SK-N-SH (cell line): ENCODE measurements at regions of chr3 and their contacts with region 1.

Region 1: GRCh38 chr3:134212906-134213665 is 37.6 kb downstream of the RYK start:
- DNase-seq: peak; percentile 58
- H3K4me3 ChIP-seq: no peak overlapping the region; a peak in 1 of 4 replicates
- H3K27ac ChIP-seq: no peak overlapping the region
- H3K4me1 ChIP-seq: no peaks in the 10 kb centered on the region; a peak in 1 of 4 replicates
- H3K27me3 ChIP-seq: no peaks in the 10 kb centered on the region
- CTCF ChIP-seq: peak; percentile 98
- EP300 ChIP-seq: no peak
- RAD21 ChIP-seq: peak; percentile 85

Region 2: DNA sequence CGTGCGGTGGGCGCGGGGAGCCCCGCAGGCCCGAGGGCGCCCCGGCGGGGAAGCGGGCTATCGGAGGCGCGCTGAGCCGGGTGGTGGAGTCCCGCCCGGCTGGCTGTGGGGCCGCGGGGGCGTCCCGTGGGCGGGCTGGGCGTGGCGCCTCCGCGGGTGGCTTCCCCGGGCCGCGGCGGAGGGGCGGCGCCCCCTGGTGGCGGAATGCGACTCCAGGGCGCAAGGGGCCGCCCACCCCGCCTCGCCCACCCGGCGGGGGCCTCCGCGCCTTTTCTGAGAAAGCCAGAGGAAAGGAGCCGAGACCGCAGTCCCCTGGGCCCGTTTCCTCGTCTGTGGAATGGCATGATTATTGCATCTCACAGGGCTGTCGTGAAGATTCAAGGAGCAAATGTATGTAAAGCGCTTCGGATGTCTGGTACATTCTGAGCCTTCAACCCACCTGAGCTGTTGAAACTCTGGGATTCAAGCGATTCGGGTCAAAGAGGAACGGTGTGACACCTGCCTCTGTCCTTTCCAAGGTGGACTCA is 285.5 kb before region 1 on chr3:
- CTCF ChIA-PET with region 1: interaction called, 152 read pairs
- POLR2A ChIA-PET with region 1: no interaction called
- DNase-seq: peak; percentile 95
- H3K4me3 ChIP-seq: peak overlapping the region; percentile 23 to 53; a peak in 3 of 4 replicates
- H3K27ac ChIP-seq: no peak overlapping the region
- H3K4me1 ChIP-seq: peaks cover 0 to 10% of the 10 kb centered on the region in 2 experiments; a peak in 2 of 4 replicates
- H3K27me3 ChIP-seq: no peaks in the 10 kb centered on the region
- CTCF ChIP-seq: peak; percentile 75
- EP300 ChIP-seq: no peak
- RAD21 ChIP-seq: peak; percentile 61

Region 3: GRCh38 chr3:133944641-133945380 is 268.3 kb before region 1 on chr3:
- CTCF ChIA-PET with region 1: interaction called, 13 read pairs
- POLR2A ChIA-PET with region 1: no interaction called
- DNase-seq: peak; percentile 59
- H3K4me3 ChIP-seq: peak overlapping the region in 1 of 2 experiments; percentile 13; a peak in 2 of 4 replicates
- H3K27ac ChIP-seq: peak overlapping the region; percentile 70 to 80
- H3K4me1 ChIP-seq: peaks cover 26 to 30% of the 10 kb centered on the region in 2 experiments; a peak in 3 of 4 replicates
- H3K27me3 ChIP-seq: peaks cover 8% of the 10 kb centered on the region; the same call in 1 of the 2 replicates
- CTCF ChIP-seq: no peak
- EP300 ChIP-seq: peak; percentile 22 to 90; a peak in 2 of 4 replicates
- RAD21 ChIP-seq: no peak

Region 4: DNA sequence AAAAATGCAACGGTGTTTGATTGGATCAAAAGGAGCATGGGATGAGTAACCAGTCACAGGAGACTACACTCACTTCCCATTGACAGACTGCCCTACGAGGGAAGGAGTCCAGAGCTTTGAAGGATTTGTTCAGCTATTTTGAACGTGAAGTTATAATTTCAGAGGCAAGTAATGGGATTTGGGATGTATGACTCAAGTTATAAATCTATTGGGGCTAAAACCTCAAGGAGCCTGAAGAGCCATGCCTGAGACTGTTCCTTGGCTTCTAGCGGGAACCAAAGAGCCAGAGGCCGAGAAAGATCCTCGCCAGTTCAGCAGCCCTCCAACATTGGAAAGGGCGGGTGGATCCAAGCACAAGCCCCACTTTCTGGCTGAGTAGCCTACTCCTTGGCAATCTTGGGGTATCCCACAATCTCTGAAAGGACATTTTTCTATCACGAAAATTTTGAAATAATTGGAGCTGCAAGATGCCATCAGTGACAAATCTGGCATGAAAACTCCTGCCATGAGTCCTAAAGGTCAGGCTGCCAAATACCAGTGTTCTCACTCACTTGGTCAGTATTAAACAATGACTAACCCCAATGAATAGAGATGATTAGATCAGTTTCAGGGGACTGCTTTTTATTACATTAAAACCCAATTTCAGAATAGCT is 134.8 kb before region 1 on chr3:
- CTCF ChIA-PET with region 1: no interaction called
- POLR2A ChIA-PET with region 1: no interaction called
- DNase-seq: no peak
- H3K4me3 ChIP-seq: no peak overlapping the region
- H3K27ac ChIP-seq: no peak overlapping the region
- H3K4me1 ChIP-seq: peaks cover 0 to 2% of the 10 kb centered on the region in 2 experiments; a peak in 1 of 4 replicates
- H3K27me3 ChIP-seq: no peaks in the 10 kb centered on the region
- CTCF ChIP-seq: no peak
- EP300 ChIP-seq: no peak
- RAD21 ChIP-seq: no peak

Region 5: DNA sequence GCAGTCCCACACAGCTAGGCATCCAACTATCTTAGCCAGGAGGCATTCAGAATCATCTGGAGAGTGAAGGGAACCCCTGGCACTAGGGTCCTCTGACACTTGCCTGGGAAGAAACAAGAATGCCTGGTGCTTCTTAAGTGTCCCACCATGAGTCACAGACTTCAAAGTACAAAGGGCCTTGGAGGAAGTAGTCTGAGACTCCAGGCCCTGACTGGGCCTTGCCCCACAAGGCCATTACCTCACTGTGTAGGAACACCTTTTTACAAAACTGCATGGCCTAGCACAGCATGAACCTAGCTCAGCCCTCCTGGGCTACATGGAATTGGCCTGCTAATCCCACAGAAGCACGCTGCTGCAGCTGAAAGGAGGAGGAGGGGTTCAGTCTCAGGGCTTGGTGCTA is 78.8 kb before region 1 on chr3:
- CTCF ChIA-PET with region 1: no interaction called
- POLR2A ChIA-PET with region 1: no interaction called
- DNase-seq: no peak
- H3K4me3 ChIP-seq: no peak overlapping the region
- H3K27ac ChIP-seq: no peak overlapping the region
- H3K4me1 ChIP-seq: no peaks in the 10 kb centered on the region
- H3K27me3 ChIP-seq: no peaks in the 10 kb centered on the region
- CTCF ChIP-seq: no peak
- EP300 ChIP-seq: no peak
- RAD21 ChIP-seq: no peak

Region 6: DNA sequence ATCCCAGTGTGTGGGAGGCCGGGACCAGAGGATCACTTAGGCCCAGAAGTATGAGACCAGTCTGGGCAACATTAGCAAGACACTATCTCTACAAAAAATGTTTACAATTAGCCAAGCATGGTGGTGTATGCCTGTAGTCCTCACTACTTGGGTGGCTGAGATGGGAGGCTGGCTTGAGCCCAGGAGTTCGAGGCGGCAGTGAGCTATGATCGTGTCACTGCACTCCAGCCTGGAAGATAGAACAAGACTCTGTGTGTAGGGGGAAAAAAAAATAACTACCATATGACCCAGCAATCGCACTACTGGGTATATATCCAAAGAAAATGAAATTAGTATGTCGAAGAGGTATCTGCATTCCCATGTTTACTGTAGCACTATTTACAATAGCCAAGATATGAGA is 14.9 kb after region 1 on chr3:
- CTCF ChIA-PET with region 1: interaction called, 82 read pairs
- POLR2A ChIA-PET with region 1: no interaction called
- DNase-seq: no peak
- H3K4me3 ChIP-seq: no peak overlapping the region
- H3K27ac ChIP-seq: no peak overlapping the region
- H3K4me1 ChIP-seq: peaks cover 2 to 6% of the 10 kb centered on the region in 2 experiments; a peak in 3 of 4 replicates
- H3K27me3 ChIP-seq: no peaks in the 10 kb centered on the region
- CTCF ChIP-seq: no peak
- EP300 ChIP-seq: no peak
- RAD21 ChIP-seq: no peak

Region 7: DNA sequence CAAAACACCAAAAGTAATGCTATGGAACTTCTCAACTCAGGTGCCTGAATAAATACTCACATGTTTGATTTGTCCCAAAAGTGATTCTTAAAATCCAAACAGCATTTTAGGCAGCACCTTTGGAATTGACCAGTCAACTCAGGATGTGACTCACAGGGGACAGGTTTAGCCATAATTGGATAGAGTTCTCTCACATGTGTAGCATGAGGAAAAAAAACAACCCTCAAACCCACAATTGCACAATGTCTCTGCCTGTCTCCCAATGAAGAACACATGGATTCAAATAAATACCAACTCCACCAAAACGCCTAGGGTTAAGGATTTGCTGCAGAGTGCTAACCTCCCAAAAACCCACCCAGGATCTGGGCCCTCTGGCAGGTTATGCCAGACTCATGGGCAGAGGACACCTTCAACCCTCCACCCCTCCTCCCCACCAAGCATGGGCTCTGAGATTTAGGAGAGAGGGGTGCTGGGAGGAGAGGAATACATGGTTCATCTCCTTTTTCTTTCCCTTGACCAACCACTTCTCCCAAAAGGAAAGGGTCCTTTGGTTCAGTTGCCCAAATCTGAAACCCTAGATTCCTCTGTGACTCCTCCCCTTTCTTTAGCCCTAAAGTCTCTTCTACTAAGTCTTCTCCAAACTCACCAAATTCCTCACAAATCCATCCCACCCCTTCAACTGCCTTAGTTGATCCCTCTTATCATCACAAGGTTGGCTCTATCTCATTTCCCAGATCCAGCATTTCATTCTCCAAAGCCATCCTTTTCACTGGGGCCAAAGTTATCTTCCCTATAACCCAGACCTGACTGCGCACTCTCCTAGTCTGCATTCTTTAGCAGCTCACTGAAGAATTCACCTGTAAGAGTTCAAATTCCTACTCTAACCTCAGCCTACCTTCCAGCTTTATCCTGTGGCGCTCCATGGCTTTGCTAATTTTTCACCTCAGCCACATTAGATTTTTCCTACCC is 29.8 kb after region 1 on chr3:
- CTCF ChIA-PET with region 1: interaction called, 25 read pairs
- POLR2A ChIA-PET with region 1: no interaction called
- DNase-seq: no peak
- H3K4me3 ChIP-seq: no peak overlapping the region
- H3K27ac ChIP-seq: no peak overlapping the region
- H3K4me1 ChIP-seq: peaks cover 6 to 7% of the 10 kb centered on the region in 2 experiments; a peak in 3 of 4 replicates
- H3K27me3 ChIP-seq: no peaks in the 10 kb centered on the region
- CTCF ChIP-seq: no peak
- EP300 ChIP-seq: no peak
- RAD21 ChIP-seq: no peak

Region 8: GRCh38 chr3:134299185-134299887 is 86.2 kb after region 1 on chr3:
- CTCF ChIA-PET with region 1: interaction called, 32 read pairs
- POLR2A ChIA-PET with region 1: no interaction called
- DNase-seq: no peak
- H3K4me3 ChIP-seq: no peak overlapping the region
- H3K27ac ChIP-seq: no peak overlapping the region
- H3K4me1 ChIP-seq: no peaks in the 10 kb centered on the region
- H3K27me3 ChIP-seq: no peaks in the 10 kb centered on the region
- CTCF ChIP-seq: peak; percentile 48
- EP300 ChIP-seq: no peak
- RAD21 ChIP-seq: peak; percentile 53

Region 9: GRCh38 chr3:134473868-134474546 is 260.9 kb after region 1 on chr3:
- CTCF ChIA-PET with region 1: interaction called, 28 read pairs
- POLR2A ChIA-PET with region 1: no interaction called
- DNase-seq: peak; percentile 44
- H3K4me3 ChIP-seq: no peak overlapping the region; a peak in 1 of 4 replicates
- H3K27ac ChIP-seq: peak overlapping the region in 1 of 2 experiments; percentile 58; a peak in 1 of 4 replicates
- H3K4me1 ChIP-seq: peaks cover 0 to 9% of the 10 kb centered on the region in 2 experiments; a peak in 3 of 4 replicates
- H3K27me3 ChIP-seq: no peaks in the 10 kb centered on the region
- CTCF ChIP-seq: peak; percentile 81
- EP300 ChIP-seq: no peak
- RAD21 ChIP-seq: peak; percentile 90